ENCODE measurements at regions of chr9 and their contacts with region 1.

Region 1: GRCh38 chr9:9612270-9612669 is 1000.5 kb downstream of the PTPRD start:
- DNase-seq: no peak
- CTCF ChIP-seq: no peak

Region 2: DNA sequence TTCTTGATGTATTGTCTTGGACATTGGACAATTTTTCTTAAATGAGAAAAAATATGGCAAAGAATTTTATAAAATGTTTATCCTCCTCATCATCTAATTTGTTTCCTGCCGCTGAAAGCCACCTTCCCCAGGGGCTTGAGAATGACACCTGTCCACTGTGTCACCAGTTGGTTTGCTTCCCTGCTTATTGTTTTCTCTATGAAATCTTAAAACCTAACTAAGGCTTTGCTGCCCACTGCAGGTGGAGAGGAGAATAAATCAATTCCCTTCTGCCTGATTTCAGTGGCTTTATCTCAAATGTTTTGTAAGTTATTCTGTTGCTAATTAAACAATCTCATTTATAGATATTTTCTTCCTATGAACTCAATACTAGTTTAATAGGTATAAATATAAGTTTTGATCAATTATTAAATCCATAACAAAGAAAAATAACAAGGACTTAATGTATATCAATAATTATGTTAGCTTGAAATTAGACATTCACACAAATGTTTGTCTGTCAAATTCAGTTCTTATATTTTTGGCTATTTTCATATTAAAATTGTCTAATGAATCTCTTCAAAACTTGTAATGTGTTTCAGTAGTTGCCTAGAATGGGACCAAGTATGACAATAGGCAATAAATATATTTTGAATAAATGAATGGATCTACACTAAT is 178.1 kb after region 1 on chr9:
- in situ Hi-C with region 1: loop called (anchors 25 kb)
- DNase-seq: peak; percentile 15
- CTCF ChIP-seq: peak; percentile 74

Region 3: DNA sequence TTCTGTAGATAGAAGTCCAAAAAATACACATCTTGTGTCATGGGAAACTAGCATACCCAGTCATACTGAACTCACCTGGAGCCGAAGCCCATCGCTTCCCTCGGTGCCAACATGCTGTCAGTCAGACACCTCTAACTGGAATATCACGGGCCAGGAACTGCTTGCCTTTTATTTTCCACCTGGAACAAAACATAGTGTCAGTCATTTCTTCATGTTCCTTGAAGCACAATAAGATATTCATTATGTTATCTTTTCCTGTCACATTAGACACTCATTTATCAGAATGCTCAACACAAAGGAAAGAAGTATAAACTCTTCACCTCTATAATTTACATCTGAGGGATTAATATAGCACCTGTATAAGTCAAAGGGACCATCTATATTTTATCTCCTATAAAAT is 326.2 kb after region 1 on chr9:
- in situ Hi-C with region 1: no loop called
- DNase-seq: no peak
- CTCF ChIP-seq: no peak

Region 4: GRCh38 chr9:10059044-10059443 is 446.8 kb after region 1 on chr9:
- in situ Hi-C with region 1: no loop called
- DNase-seq: no peak
- CTCF ChIP-seq: no peak